Sigmoid colon (tissue), 7 donors: ENCODE measurements at regions of chr1 and their contacts with region 1.

Region 1: GRCh38 chr1:156096640-156097391 is 14.6 kb upstream of the MEX3A start:
- DNase-seq: peak; percentile 96
- H3K4me3 ChIP-seq: no peak overlapping the region
- H3K27ac ChIP-seq: peak overlapping the region; percentile 64 to 84 (median 75)
- H3K4me1 ChIP-seq: peaks cover 0 to 39% (median 16%) of the 10 kb centered on the region in 4 donors
- H3K27me3 ChIP-seq: no peaks in the 10 kb centered on the region
- CTCF ChIP-seq: peak; percentile 95 to 98 (median 96)
- EP300 ChIP-seq: no peak
- POLR2A ChIP-seq: no peak

Region 2: GRCh38 chr1:156129706-156130581 is 33.1 kb after region 1 on chr1:
- intact Hi-C with region 1: loop called (anchors 1 kb)
- DNase-seq: peak; percentile 95
- H3K4me3 ChIP-seq: peak overlapping the region in 2 of 4 donors; percentile 22 to 24
- H3K27ac ChIP-seq: peak overlapping the region; percentile 95 to 100 (median 98)
- H3K4me1 ChIP-seq: peaks cover 4 to 64% (median 62%) of the 10 kb centered on the region in 4 donors
- H3K27me3 ChIP-seq: no peaks in the 10 kb centered on the region
- CTCF ChIP-seq: peak; percentile 98 to 99 (median 98)
- EP300 ChIP-seq: no peak
- POLR2A ChIP-seq: no peak

Region 3: GRCh38 chr1:156233426-156234127 is 136.8 kb after region 1 on chr1:
- intact Hi-C with region 1: no loop called
- DNase-seq: no peak
- H3K4me3 ChIP-seq: no peak overlapping the region
- H3K27ac ChIP-seq: no peak overlapping the region
- H3K4me1 ChIP-seq: peaks cover 0 to 17% (median 13%) of the 10 kb centered on the region in 4 donors
- H3K27me3 ChIP-seq: no peaks in the 10 kb centered on the region
- CTCF ChIP-seq: no peak
- EP300 ChIP-seq: no peak
- POLR2A ChIP-seq: no peak